Adrenal gland (tissue), 19 donors: ENCODE measurements at regions of chr11 and their contacts with region 1.

Region 1: DNA sequence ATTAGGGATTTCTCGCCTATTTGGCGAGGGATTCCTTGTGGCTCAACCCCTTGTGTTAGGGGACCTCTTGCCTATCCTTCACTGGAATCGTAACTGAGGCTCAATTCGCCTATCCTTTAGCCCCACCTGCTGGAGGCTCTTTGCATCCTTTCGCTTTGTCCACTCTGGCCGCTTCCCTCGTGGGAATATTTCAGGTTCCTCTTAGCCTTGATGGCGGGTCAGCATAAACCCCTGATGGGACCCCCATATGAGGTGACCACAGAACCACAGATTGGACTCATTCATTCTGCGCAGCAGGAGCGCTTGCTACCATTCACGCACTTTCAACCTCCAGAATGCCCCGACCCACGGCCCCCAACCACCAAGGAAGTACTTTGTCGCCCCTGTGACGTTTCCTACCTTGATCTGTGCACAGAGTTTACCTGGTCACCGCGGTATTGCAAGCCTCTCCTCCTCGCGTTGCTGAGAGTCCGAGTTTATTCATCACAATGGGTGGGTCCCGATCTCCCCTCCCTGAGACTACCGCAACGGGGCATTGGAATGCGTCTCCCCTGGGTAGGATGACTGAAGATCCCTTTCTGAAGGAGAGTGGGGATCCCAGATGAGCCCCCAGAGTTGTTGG is at the start of gene OR52N2:
- DNase-seq: peak; percentile 59 to 87 (median 75)
- H3K4me3 ChIP-seq: peak within 1 kb of the TSS in 2 of 4 donors; percentile 21 to 59
- H3K27ac ChIP-seq: no peak within 1 kb of the TSS
- H3K4me1 ChIP-seq: no peaks in the 10 kb centered on the region
- H3K27me3 ChIP-seq: peaks cover 7% of the 10 kb centered on the region
- CTCF ChIP-seq: peak; percentile 75 to 91 (median 82)
- POLR2A ChIP-seq: no peak
- total RNA-seq, gene OR52N2: not detected

Region 2: DNA sequence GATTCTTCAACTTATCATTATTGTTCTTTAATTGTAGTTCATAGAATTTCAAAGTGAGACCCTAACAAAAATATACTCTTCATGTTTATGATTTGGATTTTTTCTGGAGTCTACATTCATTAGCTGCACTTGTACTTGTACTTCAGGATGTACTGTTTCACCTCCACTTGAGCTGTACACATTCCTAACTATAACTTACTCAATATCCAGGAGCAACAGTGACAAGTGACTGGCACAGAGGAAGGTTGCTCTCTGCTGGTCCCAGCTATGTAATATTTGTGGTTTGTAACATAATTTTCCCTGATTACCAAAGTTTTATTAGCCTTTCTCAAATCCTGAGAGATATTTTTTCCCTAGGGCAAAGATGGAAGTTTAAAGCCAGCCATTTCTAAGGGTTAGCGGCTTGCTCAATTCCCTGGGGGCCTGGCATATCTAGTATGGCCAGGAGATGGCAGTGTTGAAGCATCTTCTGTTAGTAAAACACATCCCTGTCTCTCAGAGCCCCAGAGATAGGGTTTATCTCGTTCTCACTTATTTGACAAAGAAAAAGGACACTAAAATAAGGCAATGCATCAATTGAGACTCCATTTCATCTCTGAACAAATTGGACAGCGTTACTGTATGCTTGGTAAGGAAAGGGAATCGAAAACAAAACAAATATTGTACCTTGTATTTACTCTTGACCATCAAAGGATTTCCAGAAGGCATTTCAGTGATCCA is 684.6 kb before region 1 on chr11:
- intact Hi-C with region 1: loop called in 1 of 2 experiments (anchors 5 kb)
- DNase-seq: peak; percentile 43 to 87 (median 67)
- H3K4me3 ChIP-seq: no peak overlapping the region
- H3K27ac ChIP-seq: no peak overlapping the region
- H3K4me1 ChIP-seq: no peaks in the 10 kb centered on the region
- H3K27me3 ChIP-seq: no peaks in the 10 kb centered on the region
- CTCF ChIP-seq: peak; percentile 60 to 84 (median 75)
- POLR2A ChIP-seq: no peak

Region 3: DNA sequence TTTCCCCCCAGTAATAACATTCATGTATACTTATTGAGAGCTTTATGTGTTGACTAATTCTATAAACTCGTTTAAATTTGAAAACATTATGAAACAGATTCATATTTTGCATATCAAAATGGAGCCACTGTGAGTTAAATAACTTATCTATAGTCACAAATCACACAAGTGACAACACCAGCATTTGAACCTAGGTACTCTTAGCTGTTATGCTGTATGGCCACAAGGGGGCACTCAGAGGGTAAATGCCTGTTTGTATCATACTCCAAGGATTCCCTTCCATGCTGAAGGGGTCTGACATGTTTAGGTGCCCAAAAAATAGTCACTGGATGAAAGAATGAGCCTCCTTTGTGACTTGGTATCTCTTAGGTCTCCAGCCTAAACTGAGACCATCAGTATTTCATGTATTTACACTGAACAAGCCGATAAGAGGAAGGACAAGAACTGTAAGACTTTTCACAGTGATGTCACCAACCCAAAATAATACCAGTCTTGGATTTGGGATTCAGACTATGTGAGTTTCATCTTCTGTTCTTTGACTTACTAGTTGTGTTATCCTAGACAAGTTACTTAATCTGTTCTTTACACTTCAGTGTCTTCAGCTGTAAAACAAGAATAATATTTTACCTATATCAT is 332.3 kb before region 1 on chr11:
- intact Hi-C with region 1: loop called (anchors 5 to 10 kb)
- DNase-seq: peak; percentile 33 to 67 (median 51)
- H3K4me3 ChIP-seq: no peak overlapping the region
- H3K27ac ChIP-seq: no peak overlapping the region
- H3K4me1 ChIP-seq: no peaks in the 10 kb centered on the region
- H3K27me3 ChIP-seq: no peaks in the 10 kb centered on the region
- CTCF ChIP-seq: peak; percentile 61 to 80 (median 74)
- POLR2A ChIP-seq: no peak

Region 4: DNA sequence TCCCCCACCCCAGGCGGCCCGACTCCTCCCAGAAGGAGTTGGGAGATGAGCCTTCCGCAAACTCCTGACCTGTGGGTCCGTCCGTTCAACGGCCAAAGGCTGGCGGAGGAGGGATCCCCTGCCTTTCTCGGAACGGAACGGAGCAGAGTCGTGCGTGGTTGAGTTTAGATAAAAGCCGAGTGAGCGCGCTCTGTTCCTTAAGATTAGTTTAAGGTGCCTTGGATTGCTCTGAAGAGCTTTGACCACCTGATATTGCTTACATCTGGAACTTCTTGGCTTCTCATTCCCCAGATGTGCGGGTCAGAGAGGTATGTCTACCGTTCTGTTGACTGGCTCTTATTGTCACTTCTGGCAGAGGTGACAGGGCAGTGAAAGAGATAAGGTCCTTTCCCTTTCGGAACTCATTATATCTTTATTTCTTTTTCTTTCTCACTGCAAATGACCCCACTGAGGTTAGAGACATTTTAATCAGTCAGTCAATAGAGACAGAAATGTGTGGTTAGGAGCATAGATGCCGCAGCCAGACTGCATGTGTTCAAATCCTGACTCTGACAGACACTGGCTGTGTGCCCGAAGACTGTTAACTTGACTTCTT is 211.9 kb before region 1 on chr11 and contains the start of gene TRIM6:
- intact Hi-C with region 1: loop called in 1 of 2 experiments (anchors 10 kb)
- DNase-seq: peak; percentile 53 to 79 (median 72)
- H3K4me3 ChIP-seq: peak within 1 kb of the TSS; percentile 20 to 78 (median 37)
- H3K27ac ChIP-seq: peak within 1 kb of the TSS in 4 of 5 donors; percentile 38 to 86 (median 48)
- H3K4me1 ChIP-seq: peaks cover 0 to 13% of the 10 kb centered on the region in 2 donors
- H3K27me3 ChIP-seq: no peaks in the 10 kb centered on the region
- CTCF ChIP-seq: no peak
- POLR2A ChIP-seq: peak in 1 of 2 donors; percentile 41
- total RNA-seq, gene TRIM6: 2.9 to 29.3 (median 5.3) TPM

Region 5: GRCh38 chr11:5700421-5701054 is 108.1 kb before region 1 on chr11:
- intact Hi-C with region 1: no loop called
- DNase-seq: no peak
- H3K4me3 ChIP-seq: no peak overlapping the region
- H3K27ac ChIP-seq: no peak overlapping the region
- H3K4me1 ChIP-seq: no peaks in the 10 kb centered on the region
- H3K27me3 ChIP-seq: no peaks in the 10 kb centered on the region
- CTCF ChIP-seq: no peak
- POLR2A ChIP-seq: no peak

Region 6: GRCh38 chr11:5992604-5993251 is 184.1 kb after region 1 on chr11:
- intact Hi-C with region 1: no loop called
- DNase-seq: peak in 1 of 7 donors; percentile 10
- H3K4me3 ChIP-seq: no peak overlapping the region
- H3K27ac ChIP-seq: no peak overlapping the region
- H3K4me1 ChIP-seq: no peaks in the 10 kb centered on the region
- H3K27me3 ChIP-seq: no peaks in the 10 kb centered on the region
- CTCF ChIP-seq: peak; percentile 16 to 52 (median 38)
- POLR2A ChIP-seq: no peak

Region 7: DNA sequence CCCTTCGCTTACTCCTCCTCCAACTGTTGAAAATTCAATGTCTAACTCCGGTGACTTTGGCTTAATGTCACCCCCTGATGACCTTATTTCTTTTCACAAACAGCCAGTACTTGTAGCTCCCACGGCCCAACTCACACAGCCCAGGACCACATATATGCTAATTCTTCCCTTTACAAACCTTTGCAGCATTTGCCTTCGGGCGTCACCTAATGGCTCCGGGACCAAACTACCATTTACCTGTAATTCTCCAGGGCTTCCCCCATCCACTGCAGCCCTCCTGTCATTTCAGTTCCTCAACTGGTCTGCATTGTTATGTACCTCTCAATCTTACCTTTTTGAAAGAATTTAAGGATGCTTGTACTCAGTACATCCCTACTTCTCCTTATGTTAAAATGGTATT is 269.1 kb after region 1 on chr11:
- intact Hi-C with region 1: no loop called
- DNase-seq: no peak
- H3K4me3 ChIP-seq: no peak overlapping the region
- H3K27ac ChIP-seq: no peak overlapping the region
- H3K4me1 ChIP-seq: no peaks in the 10 kb centered on the region
- H3K27me3 ChIP-seq: no peaks in the 10 kb centered on the region
- CTCF ChIP-seq: no peak
- POLR2A ChIP-seq: no peak